ENCODE measurements at regions of chr14 and their contacts with region 1.

Region 1: GRCh38 chr14:80941241-80942182 is at the start of gene CEP128:
- DNase-seq: peak; percentile 97
- ATAC-seq: peak; percentile 97
- H3K4me3 Mint-ChIP-seq: peak within 1 kb of the TSS; percentile 90
- H3K27ac Mint-ChIP-seq: peak within 1 kb of the TSS; percentile 84
- H3K4me1 Mint-ChIP-seq: peaks cover 12% of the 10 kb centered on the region
- H3K27me3 Mint-ChIP-seq: no peaks in the 10 kb centered on the region; the same call in 1 of the 2 replicates
- CTCF ChIP-seq: no peak
- total RNA-seq, gene CEP128: 12.0 to 17.3 TPM (median 16.5 TPM) in 3 replicates

Region 2: DNA sequence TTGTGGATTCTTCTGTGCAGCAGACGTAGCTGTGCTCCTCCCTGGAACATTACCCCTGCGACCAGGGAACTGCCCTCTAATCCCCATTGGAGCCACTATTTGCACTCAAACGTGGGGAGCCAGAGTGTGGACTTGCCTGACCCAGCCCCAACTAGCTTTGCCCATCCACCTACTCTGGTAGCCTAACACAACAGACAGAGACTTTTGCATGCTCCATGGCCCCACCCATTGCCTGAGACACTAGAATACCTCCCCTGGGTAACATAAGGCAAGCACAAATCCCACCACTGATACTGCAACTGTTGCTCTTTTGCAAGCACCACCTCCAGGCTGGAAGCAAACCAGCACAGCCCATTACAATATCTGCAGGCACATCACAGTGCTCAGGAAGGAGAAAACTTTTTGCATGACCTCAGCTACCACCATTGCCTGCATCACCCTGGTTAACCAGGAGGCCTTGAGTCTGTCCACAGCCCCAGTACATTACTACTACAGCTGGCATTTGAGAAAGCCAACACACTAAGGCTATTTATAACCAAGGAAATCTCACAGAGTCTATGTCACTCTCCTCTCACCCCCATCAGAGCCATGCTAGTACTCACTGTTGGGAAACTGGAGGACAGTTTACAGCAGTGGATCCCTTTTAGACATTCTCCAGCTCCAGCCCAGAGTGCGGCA is 15.0 kb before region 1 on chr14:
- CTCF ChIA-PET with region 1: interaction called, 13 read pairs
- POLR2A ChIA-PET with region 1: no interaction called
- DNase-seq: no peak
- ATAC-seq: no peak
- H3K4me3 Mint-ChIP-seq: no peak overlapping the region
- H3K27ac Mint-ChIP-seq: no peak overlapping the region
- H3K4me1 Mint-ChIP-seq: peaks cover 41% of the 10 kb centered on the region
- H3K27me3 Mint-ChIP-seq: no peaks in the 10 kb centered on the region
- CTCF ChIP-seq: no peak

Region 3: DNA sequence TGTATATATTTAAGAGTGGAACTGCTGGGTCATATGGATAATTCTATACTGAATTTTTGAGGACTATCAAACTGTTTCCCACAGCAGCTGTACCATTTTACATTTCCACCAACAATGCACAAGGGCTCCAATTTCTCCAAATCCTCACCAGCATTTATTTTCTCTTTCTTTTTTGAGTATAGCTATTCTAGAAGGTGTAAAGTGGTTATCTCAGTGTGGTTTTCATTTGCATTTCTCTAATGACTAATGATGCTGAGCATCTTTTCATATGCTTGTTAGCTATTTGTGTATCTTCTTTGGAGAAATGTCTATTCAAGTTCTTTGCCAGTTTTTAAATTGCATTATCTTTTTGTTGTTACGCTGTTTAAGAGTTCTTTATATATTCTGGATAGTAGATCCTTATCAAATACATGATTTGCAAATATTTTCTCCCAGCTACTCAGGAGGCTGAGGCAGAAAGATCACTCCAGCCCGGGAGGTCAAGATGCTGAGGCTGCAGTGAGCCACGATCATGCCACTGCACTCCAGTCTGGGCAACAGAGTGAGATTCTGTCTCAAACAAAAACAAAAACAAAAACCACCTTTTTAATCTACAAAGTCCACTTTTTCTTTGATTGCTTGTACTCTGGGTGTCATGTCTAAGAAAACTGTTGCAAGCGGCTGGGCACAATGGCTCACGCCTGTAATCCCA is 246.5 kb after region 1 on chr14:
- CTCF ChIA-PET with region 1: no interaction called
- POLR2A ChIA-PET with region 1: no interaction called
- DNase-seq: no peak
- ATAC-seq: no peak
- H3K4me3 Mint-ChIP-seq: no peak overlapping the region
- H3K27ac Mint-ChIP-seq: no peak overlapping the region; the same call in 1 of the 2 replicates
- H3K4me1 Mint-ChIP-seq: no peaks in the 10 kb centered on the region
- H3K27me3 Mint-ChIP-seq: no peaks in the 10 kb centered on the region
- CTCF ChIP-seq: no peak

Measured in WTC11 (cell line).